ENCODE measurements at regions of chr12 and their contacts with region 1.

Region 1: DNA sequence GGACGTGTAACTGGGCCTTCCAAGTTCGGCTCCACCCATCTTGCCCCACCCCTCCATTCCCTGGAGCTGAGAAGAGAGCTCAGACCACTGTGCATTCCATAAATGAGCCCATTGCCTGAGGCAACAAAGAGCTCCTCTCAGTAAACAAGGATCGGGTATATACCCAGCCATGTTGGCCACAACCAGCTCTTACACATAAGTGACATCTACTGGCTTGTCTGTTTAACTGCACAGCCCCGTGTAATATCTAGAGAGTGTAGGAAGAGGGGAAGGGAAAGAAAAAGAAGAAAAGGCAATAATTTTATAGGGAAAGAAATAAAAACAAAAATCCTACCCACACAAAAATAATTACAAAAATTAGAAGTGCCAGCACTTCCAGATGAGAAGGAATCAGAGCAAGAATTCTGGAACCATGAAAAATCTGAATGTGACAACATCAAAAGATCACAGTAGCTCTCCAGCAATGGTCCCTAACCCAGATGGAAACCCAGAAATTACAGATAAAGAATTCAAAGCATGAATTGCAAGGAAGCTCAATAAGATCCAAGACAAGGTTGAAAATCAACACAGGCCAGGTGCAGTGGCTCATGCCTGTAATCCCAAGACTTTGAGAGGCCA is 308.1 kb downstream of the RPAP3 start:
- DNase-seq: peak; percentile 63
- ATAC-seq: peak; percentile 76
- H3K4me3 Mint-ChIP-seq: no peak overlapping the region
- H3K27ac Mint-ChIP-seq: peak overlapping the region; percentile 96
- H3K4me1 Mint-ChIP-seq: peaks cover 90% of the 10 kb centered on the region
- H3K27me3 Mint-ChIP-seq: no peaks in the 10 kb centered on the region
- CTCF ChIP-seq: peak; percentile 80

Region 2: DNA sequence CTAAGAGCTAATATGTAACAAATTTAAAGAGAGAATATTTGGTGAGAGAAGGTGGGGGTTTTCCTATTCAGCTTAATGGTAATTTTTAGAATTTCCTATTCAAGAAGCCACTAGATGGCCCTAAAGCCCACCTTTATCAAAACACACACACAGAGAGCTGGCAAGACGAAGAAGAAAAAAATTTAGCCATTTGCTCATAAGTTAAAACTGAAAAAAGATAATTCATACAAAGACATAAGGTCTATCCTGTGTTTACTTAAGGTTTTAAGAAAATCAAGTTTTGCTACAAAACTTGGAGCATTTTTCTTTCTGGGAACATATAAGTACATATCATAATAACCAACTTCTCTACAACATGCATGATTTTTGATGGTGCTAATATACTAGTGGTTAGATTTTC is 365.1 kb before region 1 on chr12:
- CTCF ChIA-PET with region 1: interaction called, 44 read pairs
- POLR2A ChIA-PET with region 1: no interaction called
- intact Hi-C with region 1: loop called (anchors 5 kb)
- DNase-seq: peak; percentile 12
- ATAC-seq: peak; percentile 81
- H3K4me3 Mint-ChIP-seq: no peak overlapping the region
- H3K27ac Mint-ChIP-seq: peak overlapping the region; percentile 10
- H3K4me1 Mint-ChIP-seq: peaks cover 37% of the 10 kb centered on the region
- H3K27me3 Mint-ChIP-seq: no peaks in the 10 kb centered on the region
- CTCF ChIP-seq: peak; percentile 84

Region 3: DNA sequence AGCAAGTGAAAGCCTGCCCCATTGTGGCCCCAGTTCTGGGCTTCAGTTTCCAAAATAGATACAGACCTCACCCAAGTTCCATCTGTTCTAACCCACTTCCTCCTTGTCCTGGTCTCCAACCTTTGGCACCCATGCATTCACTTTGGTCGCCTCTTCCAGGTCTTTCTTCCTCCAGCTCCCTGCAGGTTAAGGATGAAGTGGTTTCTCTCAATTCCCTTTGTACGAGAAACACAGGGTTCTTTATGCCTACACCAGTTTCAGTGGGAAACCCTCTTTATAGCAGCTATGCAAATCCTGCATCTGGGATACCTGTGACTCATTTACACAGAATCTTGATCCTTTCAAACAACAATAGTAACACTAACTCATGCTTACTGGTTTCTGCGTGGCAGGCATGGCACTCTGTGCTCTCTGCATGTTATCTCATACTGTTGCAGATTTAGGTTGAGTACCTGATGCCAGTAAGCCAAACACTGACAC is 207.5 kb before region 1 on chr12:
- CTCF ChIA-PET with region 1: interaction called, 19 read pairs
- POLR2A ChIA-PET with region 1: interaction called, 3 read pairs
- intact Hi-C with region 1: no loop called
- DNase-seq: peak; percentile 62
- ATAC-seq: peak; percentile 71
- H3K4me3 Mint-ChIP-seq: peak overlapping the region; percentile 57
- H3K27ac Mint-ChIP-seq: peak overlapping the region; percentile 95
- H3K4me1 Mint-ChIP-seq: peaks cover 84% of the 10 kb centered on the region
- H3K27me3 Mint-ChIP-seq: no peaks in the 10 kb centered on the region
- CTCF ChIP-seq: no peak

Region 4: DNA sequence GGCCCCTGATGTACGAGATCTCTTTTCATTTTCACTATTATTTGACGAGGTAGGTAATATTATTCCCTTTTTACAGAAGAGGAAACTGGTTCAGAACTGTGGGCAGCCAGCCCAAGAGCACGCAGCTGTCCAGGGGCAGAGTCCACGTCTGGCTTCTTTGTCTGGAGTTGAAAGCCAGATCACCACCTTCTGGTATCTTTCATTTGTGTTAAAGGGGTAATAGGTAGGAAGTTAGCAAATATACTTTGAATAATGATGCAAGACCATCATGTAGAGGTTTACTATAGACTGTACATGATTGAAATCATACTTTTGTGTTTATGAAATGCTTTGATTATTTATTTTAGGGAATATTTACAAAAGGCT is 173.9 kb before region 1 on chr12:
- CTCF ChIA-PET with region 1: interaction called, 13 read pairs
- POLR2A ChIA-PET with region 1: interaction called, 4 read pairs
- intact Hi-C with region 1: no loop called
- DNase-seq: no peak
- ATAC-seq: no peak
- H3K4me3 Mint-ChIP-seq: peak overlapping the region; percentile 74
- H3K27ac Mint-ChIP-seq: peak overlapping the region; percentile 88
- H3K4me1 Mint-ChIP-seq: peaks cover 73% of the 10 kb centered on the region
- H3K27me3 Mint-ChIP-seq: no peaks in the 10 kb centered on the region
- CTCF ChIP-seq: no peak

Region 5: GRCh38 chr12:47321436-47321835 is 76.3 kb before region 1 on chr12:
- CTCF ChIA-PET with region 1: interaction called, 15 read pairs
- POLR2A ChIA-PET with region 1: interaction called, 4 read pairs
- intact Hi-C with region 1: no loop called
- DNase-seq: no peak
- ATAC-seq: no peak
- H3K4me3 Mint-ChIP-seq: no peak overlapping the region
- H3K27ac Mint-ChIP-seq: no peak overlapping the region
- H3K4me1 Mint-ChIP-seq: peaks cover 39% of the 10 kb centered on the region
- H3K27me3 Mint-ChIP-seq: no peaks in the 10 kb centered on the region
- CTCF ChIP-seq: no peak

Region 6: GRCh38 chr12:47413806-47414205 is 16.0 kb after region 1 on chr12:
- CTCF ChIA-PET with region 1: interaction called, 16 read pairs
- POLR2A ChIA-PET with region 1: interaction called, 3 read pairs
- intact Hi-C with region 1: no loop called
- DNase-seq: no peak
- ATAC-seq: no peak
- H3K4me3 Mint-ChIP-seq: no peak overlapping the region
- H3K27ac Mint-ChIP-seq: peak overlapping the region; percentile 12
- H3K4me1 Mint-ChIP-seq: peaks cover 73% of the 10 kb centered on the region
- H3K27me3 Mint-ChIP-seq: no peaks in the 10 kb centered on the region
- CTCF ChIP-seq: no peak

Region 7: GRCh38 chr12:47491516-47492305 is 93.9 kb after region 1 on chr12:
- CTCF ChIA-PET with region 1: no interaction called
- POLR2A ChIA-PET with region 1: no interaction called
- intact Hi-C with region 1: no loop called
- DNase-seq: no peak
- ATAC-seq: no peak
- H3K4me3 Mint-ChIP-seq: no peak overlapping the region
- H3K27ac Mint-ChIP-seq: no peak overlapping the region
- H3K4me1 Mint-ChIP-seq: peaks cover 13% of the 10 kb centered on the region
- H3K27me3 Mint-ChIP-seq: peaks cover 1% of the 10 kb centered on the region
- CTCF ChIP-seq: no peak